Activated B cell treated with CpG ODN at 0.5 μM for 24 hours (primary cell): ENCODE measurements at regions of chr2 and their contacts with region 1.

Region 1: DNA sequence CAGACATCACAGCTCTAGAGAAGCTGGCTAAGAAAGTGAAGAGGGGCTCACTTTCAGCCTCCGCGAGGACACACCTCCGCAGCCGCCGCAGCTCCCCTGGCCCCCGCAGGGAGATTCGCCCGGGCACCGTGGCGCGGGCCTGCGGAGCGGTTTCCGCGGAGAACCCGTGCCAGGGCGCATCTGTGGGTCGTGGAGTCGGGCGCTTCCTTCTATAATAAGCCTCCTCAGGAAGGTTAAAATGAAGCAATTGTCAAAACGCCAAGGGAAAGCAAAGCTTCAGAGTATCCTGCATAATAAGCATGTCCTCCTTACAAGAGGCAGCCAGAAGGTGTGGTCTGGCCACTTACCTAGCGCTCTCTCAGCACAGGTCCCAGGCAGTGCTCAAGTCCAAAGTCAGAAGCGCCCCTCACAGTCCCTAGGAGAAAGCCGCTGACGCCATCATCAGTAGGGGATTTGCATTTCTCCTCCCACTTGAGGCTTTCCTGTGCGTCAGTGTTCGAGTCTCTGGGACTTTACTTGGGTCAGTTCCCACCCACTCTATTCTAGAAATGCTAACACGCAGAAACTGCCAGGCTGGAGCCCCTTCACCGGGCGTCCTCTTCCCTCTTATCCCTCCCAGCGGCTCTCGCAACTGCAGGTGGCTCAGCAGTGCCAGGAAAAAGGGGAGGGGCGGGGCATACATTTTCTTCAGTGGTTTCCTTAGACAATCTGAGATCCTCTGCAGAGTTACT is at the start of gene STAT4:
- DNase-seq: peak; percentile 55
- ATAC-seq: peak; percentile 92
- H3K4me3 Mint-ChIP-seq: peak within 1 kb of the TSS; percentile 89
- H3K27ac Mint-ChIP-seq: peak within 1 kb of the TSS; percentile 79
- H3K4me1 Mint-ChIP-seq: peaks cover 30% of the 10 kb centered on the region
- H3K27me3 Mint-ChIP-seq: peaks cover 8% of the 10 kb centered on the region
- CTCF ChIP-seq: no peak
- total RNA-seq, gene STAT4: 15.1 and 16.5 TPM in 2 replicates

Region 2: GRCh38 chr2:190781604-190782198 is 369.1 kb before region 1 on chr2:
- CTCF ChIA-PET with region 1: interaction called, 5 read pairs
- POLR2A ChIA-PET with region 1: no interaction called
- intact Hi-C with region 1: loop called (anchors 1 kb)
- DNase-seq: no peak
- ATAC-seq: no peak
- H3K4me3 Mint-ChIP-seq: no peak overlapping the region
- H3K27ac Mint-ChIP-seq: no peak overlapping the region
- H3K4me1 Mint-ChIP-seq: no peaks in the 10 kb centered on the region
- H3K27me3 Mint-ChIP-seq: peaks cover 4% of the 10 kb centered on the region
- CTCF ChIP-seq: no peak

Region 3: DNA sequence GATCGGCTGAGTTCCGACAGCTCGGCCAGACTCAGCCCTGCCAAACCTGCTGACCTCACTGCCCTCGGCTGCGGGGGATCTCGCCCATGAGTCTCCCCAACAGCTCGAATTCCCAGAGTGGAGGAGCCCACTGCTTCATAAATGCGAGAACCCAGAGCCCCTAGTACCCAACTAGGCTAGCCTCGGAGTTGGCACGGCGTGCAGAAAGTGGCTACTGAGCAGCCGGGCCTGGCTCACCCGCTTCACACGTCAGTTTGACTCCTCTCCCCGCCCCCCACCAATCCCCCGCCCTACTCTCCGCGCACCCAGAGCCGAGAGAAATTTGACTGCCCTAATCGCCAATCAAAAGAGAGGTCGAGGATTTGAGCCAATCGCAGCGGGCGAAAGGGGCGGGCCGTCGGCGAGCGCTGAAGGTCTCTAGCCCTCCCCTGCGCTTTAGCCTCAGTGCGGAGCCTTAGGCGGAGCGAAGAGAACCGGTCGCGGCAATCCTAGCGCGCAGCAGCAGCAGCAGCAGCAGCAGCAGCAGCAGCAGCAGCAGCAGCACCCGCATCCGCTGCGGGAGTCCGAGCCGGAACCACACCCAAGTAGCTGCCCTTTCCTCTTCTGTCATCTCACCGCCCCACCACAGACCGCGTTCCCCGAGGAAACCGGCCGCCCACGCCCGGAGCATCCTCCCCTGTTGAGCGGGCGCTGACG is 270.2 kb before region 1 on chr2 and contains the start of gene GLS:
- CTCF ChIA-PET with region 1: no interaction called
- POLR2A ChIA-PET with region 1: no interaction called
- intact Hi-C with region 1: loop called (anchors 10 kb)
- DNase-seq: peak; percentile 90
- ATAC-seq: peak; percentile 82
- H3K4me3 Mint-ChIP-seq: peak within 1 kb of the TSS; percentile 97
- H3K27ac Mint-ChIP-seq: peak within 1 kb of the TSS; percentile 97
- H3K4me1 Mint-ChIP-seq: peaks cover 44% of the 10 kb centered on the region
- H3K27me3 Mint-ChIP-seq: no peaks in the 10 kb centered on the region
- CTCF ChIP-seq: no peak
- total RNA-seq, gene GLS: 212 and 255 TPM in 2 replicates

Region 4: GRCh38 chr2:191013932-191014652 is 136.7 kb before region 1 on chr2 and contains the start of gene STAT1:
- CTCF ChIA-PET with region 1: interaction called, 3 read pairs
- POLR2A ChIA-PET with region 1: interaction called, 9 read pairs
- intact Hi-C with region 1: loop called (anchors 1 kb)
- DNase-seq: peak; percentile 98
- ATAC-seq: peak; percentile 91
- H3K4me3 Mint-ChIP-seq: no peak within 1 kb of the TSS
- H3K27ac Mint-ChIP-seq: no peak within 1 kb of the TSS
- H3K4me1 Mint-ChIP-seq: peaks cover 29% of the 10 kb centered on the region
- H3K27me3 Mint-ChIP-seq: no peaks in the 10 kb centered on the region
- CTCF ChIP-seq: no peak
- total RNA-seq, gene STAT1: 71.2 and 85.1 TPM in 2 replicates

Region 5: DNA sequence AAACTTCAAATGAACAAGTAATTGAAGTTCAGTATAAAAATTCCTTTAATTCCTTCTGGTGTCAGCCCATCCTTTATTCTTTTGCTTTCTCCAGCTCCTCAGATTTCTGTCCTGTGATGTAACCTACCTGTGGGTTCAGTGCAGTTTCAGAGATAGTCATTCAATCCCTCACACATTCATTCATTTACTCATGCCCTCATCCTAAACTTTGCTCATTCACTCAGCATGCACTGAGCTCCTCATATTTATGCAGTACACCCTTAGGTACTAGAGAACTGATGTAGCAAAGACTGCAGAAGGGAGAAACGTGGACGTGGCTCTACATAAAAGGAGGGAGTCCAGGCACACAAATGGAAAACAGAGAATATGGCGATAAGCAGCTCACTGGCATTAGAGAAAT is 91.5 kb before region 1 on chr2:
- CTCF ChIA-PET with region 1: interaction called, 20 read pairs
- POLR2A ChIA-PET with region 1: no interaction called
- intact Hi-C with region 1: no loop called
- DNase-seq: no peak
- ATAC-seq: no peak
- H3K4me3 Mint-ChIP-seq: no peak overlapping the region
- H3K27ac Mint-ChIP-seq: no peak overlapping the region
- H3K4me1 Mint-ChIP-seq: no peaks in the 10 kb centered on the region
- H3K27me3 Mint-ChIP-seq: peaks cover 9% of the 10 kb centered on the region
- CTCF ChIP-seq: no peak

Region 6: GRCh38 chr2:191100216-191100615 is 50.5 kb before region 1 on chr2:
- CTCF ChIA-PET with region 1: no interaction called
- POLR2A ChIA-PET with region 1: no interaction called
- intact Hi-C with region 1: no loop called
- DNase-seq: no peak
- ATAC-seq: no peak
- H3K4me3 Mint-ChIP-seq: no peak overlapping the region
- H3K27ac Mint-ChIP-seq: no peak overlapping the region
- H3K4me1 Mint-ChIP-seq: no peaks in the 10 kb centered on the region
- H3K27me3 Mint-ChIP-seq: peaks cover 1% of the 10 kb centered on the region
- CTCF ChIP-seq: no peak

Region 7: GRCh38 chr2:191617575-191617974 is 466.8 kb after region 1 on chr2:
- CTCF ChIA-PET with region 1: no interaction called
- POLR2A ChIA-PET with region 1: interaction called, 3 read pairs
- intact Hi-C with region 1: loop called (anchors 5 kb)
- DNase-seq: peak; percentile 19
- ATAC-seq: peak; percentile 90
- H3K4me3 Mint-ChIP-seq: peak overlapping the region; percentile 56
- H3K27ac Mint-ChIP-seq: peak overlapping the region; percentile 86
- H3K4me1 Mint-ChIP-seq: peaks cover 53% of the 10 kb centered on the region
- H3K27me3 Mint-ChIP-seq: no peaks in the 10 kb centered on the region
- CTCF ChIP-seq: no peak